CD4-positive, alpha-beta memory T cell (primary cell): ENCODE measurements at regions of chr9 and their contacts with region 1.

Region 1: DNA sequence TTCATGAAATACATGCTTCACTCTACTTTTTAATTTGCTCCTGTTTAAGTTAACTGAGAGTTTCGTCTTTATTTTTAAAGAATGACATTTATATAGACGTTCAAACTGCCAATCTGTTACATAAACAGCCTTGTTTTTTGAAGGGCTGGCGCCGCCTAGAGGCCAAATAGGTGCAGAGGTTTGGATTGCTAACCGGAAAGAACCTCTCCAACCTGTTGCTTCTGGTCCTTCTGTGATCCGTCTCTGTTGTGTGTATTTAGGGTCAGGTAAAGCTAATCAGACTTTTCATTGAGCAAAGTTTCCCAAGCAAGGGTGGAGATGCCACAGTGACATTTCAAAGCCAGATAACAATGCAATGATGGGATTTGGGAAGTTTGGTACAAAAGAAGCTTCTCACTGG is 39.5 kb upstream of the GLIS3 start:
- DNase-seq: peak; percentile 71 to 79 (median 76)
- H3K4me3 ChIP-seq: no peak overlapping the region
- H3K4me3 Mint-ChIP-seq: peak overlapping the region in 2 of 8 donors; percentile 44 to 64
- H3K27ac ChIP-seq: no peak overlapping the region
- H3K27ac Mint-ChIP-seq: peak overlapping the region in 6 of 7 donors; percentile 37 to 91 (median 58)
- H3K4me1 ChIP-seq: no peaks in the 10 kb centered on the region
- H3K4me1 Mint-ChIP-seq: peaks cover 3 to 12% (median 4%) of the 10 kb centered on the region in 4 donors
- H3K27me3 ChIP-seq: no peaks in the 10 kb centered on the region
- H3K27me3 Mint-ChIP-seq: peaks cover 0 to 1% of the 10 kb centered on the region in 2 donors

Region 2: GRCh38 chr9:2857564-2858198 is 1481.7 kb before region 1 on chr9:
- CTCF ChIA-PET with region 1: interaction called, 8 read pairs
- POLR2A ChIA-PET with region 1: no interaction called
- intact Hi-C with region 1: loop called (anchors 1 kb)
- DNase-seq: peak; percentile 43 to 50 (median 48)
- H3K4me3 ChIP-seq: no peak overlapping the region
- H3K4me3 Mint-ChIP-seq: no peak overlapping the region
- H3K27ac ChIP-seq: no peak overlapping the region
- H3K27ac Mint-ChIP-seq: no peak overlapping the region
- H3K4me1 ChIP-seq: no peaks in the 10 kb centered on the region
- H3K4me1 Mint-ChIP-seq: peaks cover 0 to 7% (median 4%) of the 10 kb centered on the region in 4 donors
- H3K27me3 ChIP-seq: peaks cover 11% of the 10 kb centered on the region
- H3K27me3 Mint-ChIP-seq: peaks cover 16 to 19% of the 10 kb centered on the region in 2 donors

Region 3: DNA sequence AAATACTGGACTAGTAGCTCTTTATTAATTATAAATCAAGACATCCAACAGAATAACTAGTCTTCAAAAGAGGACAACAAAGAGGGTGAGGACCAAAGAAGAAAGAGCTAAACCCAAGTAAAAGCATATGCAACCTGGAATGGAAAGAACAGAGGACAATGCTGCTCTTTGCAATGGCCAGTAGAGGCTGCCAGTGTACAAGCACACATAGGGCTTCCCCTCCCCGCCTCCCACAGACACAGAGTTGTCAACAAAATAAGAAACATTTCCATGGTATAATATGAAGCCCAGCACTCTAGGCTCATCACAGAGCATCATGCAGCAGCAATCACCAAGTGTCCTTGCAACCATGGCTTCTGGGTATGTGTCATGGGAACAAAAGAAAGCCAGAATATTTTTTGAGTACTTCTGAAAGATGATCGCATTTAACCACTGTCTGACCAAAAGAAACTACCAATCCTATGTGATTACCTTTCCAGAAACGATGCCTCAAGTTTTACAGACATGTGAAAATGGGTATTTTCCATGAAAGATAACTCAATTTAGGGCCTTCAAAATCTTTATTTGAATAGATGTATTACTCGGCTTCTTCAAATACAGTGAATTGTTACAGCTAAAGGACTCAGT is 871.7 kb before region 1 on chr9:
- CTCF ChIA-PET with region 1: interaction called, 3 read pairs
- POLR2A ChIA-PET with region 1: no interaction called
- intact Hi-C with region 1: loop called (anchors 1 kb)
- DNase-seq: peak; percentile 51 to 70 (median 61)
- H3K4me3 ChIP-seq: no peak overlapping the region
- H3K4me3 Mint-ChIP-seq: peak overlapping the region in 2 of 8 donors; percentile 36 to 41
- H3K27ac ChIP-seq: no peak overlapping the region
- H3K27ac Mint-ChIP-seq: peak overlapping the region in 2 of 7 donors; percentile 27 to 29
- H3K4me1 ChIP-seq: peaks cover 5% of the 10 kb centered on the region
- H3K4me1 Mint-ChIP-seq: peaks cover 4 to 8% (median 5%) of the 10 kb centered on the region in 4 donors
- H3K27me3 ChIP-seq: no peaks in the 10 kb centered on the region
- H3K27me3 Mint-ChIP-seq: no peaks in the 10 kb centered on the region

Region 4: GRCh38 chr9:4077499-4078102 is 261.8 kb before region 1 on chr9:
- CTCF ChIA-PET with region 1: no interaction called
- POLR2A ChIA-PET with region 1: no interaction called
- intact Hi-C with region 1: loop called (anchors 10 kb)
- DNase-seq: peak in 3 of 5 donors; percentile 1 to 6 (median 6)
- H3K4me3 ChIP-seq: no peak overlapping the region
- H3K4me3 Mint-ChIP-seq: no peak overlapping the region
- H3K27ac ChIP-seq: no peak overlapping the region
- H3K27ac Mint-ChIP-seq: no peak overlapping the region
- H3K4me1 ChIP-seq: no peaks in the 10 kb centered on the region
- H3K4me1 Mint-ChIP-seq: no peaks in the 10 kb centered on the region
- H3K27me3 ChIP-seq: no peaks in the 10 kb centered on the region
- H3K27me3 Mint-ChIP-seq: peaks cover 2 to 3% of the 10 kb centered on the region in 2 donors

Region 5: GRCh38 chr9:4315582-4316215 is 23.7 kb before region 1 on chr9:
- CTCF ChIA-PET with region 1: interaction called, 73 read pairs
- POLR2A ChIA-PET with region 1: no interaction called
- intact Hi-C with region 1: no loop called
- DNase-seq: peak; percentile 54 to 57 (median 56)
- H3K4me3 ChIP-seq: no peak overlapping the region
- H3K4me3 Mint-ChIP-seq: no peak overlapping the region
- H3K27ac ChIP-seq: no peak overlapping the region
- H3K27ac Mint-ChIP-seq: no peak overlapping the region
- H3K4me1 ChIP-seq: no peaks in the 10 kb centered on the region
- H3K4me1 Mint-ChIP-seq: no peaks in the 10 kb centered on the region
- H3K27me3 ChIP-seq: no peaks in the 10 kb centered on the region
- H3K27me3 Mint-ChIP-seq: peaks cover 3 to 6% of the 10 kb centered on the region in 2 donors

Region 6: DNA sequence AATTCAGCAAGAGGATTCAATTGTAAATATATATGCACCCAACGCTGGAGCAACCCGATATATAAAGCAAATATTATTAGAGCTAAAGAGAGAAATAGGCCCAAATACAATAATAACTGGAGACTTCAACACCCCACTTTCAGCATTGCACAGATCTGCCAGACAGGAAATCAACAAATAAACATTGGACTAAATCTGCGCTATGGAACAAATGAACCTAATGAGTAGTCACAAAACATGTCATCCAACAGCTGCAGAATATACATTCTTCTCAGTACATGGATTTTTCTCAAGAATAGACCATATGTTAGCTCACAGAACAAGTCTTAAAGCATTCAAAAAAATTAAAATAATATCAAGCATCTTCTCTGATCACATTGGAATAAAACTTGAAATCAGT is 64.8 kb after region 1 on chr9:
- CTCF ChIA-PET with region 1: no interaction called
- POLR2A ChIA-PET with region 1: no interaction called
- intact Hi-C with region 1: no loop called
- DNase-seq: no peak
- H3K4me3 ChIP-seq: no peak overlapping the region
- H3K4me3 Mint-ChIP-seq: no peak overlapping the region
- H3K27ac ChIP-seq: no peak overlapping the region
- H3K27ac Mint-ChIP-seq: no peak overlapping the region
- H3K4me1 ChIP-seq: no peaks in the 10 kb centered on the region
- H3K4me1 Mint-ChIP-seq: no peaks in the 10 kb centered on the region
- H3K27me3 ChIP-seq: no peaks in the 10 kb centered on the region
- H3K27me3 Mint-ChIP-seq: peaks cover 5 to 8% of the 10 kb centered on the region in 2 donors